ENCODE measurements at regions of chr10 and their contacts with region 1.

Region 1: GRCh38 chr10:69506834-69507721 is 55.8 kb downstream of the TSPAN15 start:
- DNase-seq: no peak
- H3K4me3 ChIP-seq: peak overlapping the region in 2 of 7 experiments; percentile 46 to 73
- H3K27ac ChIP-seq: no peak overlapping the region
- H3K4me1 ChIP-seq: peaks cover 0 to 4% (median 2%) of the 10 kb centered on the region in 4 experiments
- H3K27me3 ChIP-seq: peaks cover 0 to 5% (median 0%) of the 10 kb centered on the region in 5 experiments

Region 2: GRCh38 chr10:69408318-69409175 is 98.5 kb before region 1 on chr10:
- CTCF ChIA-PET with region 1: interaction called, 49 read pairs
- POLR2A ChIA-PET with region 1: no interaction called
- DNase-seq: peak; percentile 91 to 95 (median 95)
- H3K4me3 ChIP-seq: peak overlapping the region in 4 of 7 experiments; percentile 29 to 62 (median 46)
- H3K27ac ChIP-seq: no peak overlapping the region
- H3K4me1 ChIP-seq: peaks cover 0 to 20% (median 13%) of the 10 kb centered on the region in 4 experiments
- H3K27me3 ChIP-seq: no peaks in the 10 kb centered on the region

Region 3: GRCh38 chr10:69425511-69426298 is 81.4 kb before region 1 on chr10:
- CTCF ChIA-PET with region 1: interaction called, 17 read pairs
- POLR2A ChIA-PET with region 1: no interaction called
- DNase-seq: no peak
- H3K4me3 ChIP-seq: no peak overlapping the region
- H3K27ac ChIP-seq: no peak overlapping the region
- H3K4me1 ChIP-seq: peaks cover 0 to 11% (median 2%) of the 10 kb centered on the region in 4 experiments
- H3K27me3 ChIP-seq: no peaks in the 10 kb centered on the region

Region 4: DNA sequence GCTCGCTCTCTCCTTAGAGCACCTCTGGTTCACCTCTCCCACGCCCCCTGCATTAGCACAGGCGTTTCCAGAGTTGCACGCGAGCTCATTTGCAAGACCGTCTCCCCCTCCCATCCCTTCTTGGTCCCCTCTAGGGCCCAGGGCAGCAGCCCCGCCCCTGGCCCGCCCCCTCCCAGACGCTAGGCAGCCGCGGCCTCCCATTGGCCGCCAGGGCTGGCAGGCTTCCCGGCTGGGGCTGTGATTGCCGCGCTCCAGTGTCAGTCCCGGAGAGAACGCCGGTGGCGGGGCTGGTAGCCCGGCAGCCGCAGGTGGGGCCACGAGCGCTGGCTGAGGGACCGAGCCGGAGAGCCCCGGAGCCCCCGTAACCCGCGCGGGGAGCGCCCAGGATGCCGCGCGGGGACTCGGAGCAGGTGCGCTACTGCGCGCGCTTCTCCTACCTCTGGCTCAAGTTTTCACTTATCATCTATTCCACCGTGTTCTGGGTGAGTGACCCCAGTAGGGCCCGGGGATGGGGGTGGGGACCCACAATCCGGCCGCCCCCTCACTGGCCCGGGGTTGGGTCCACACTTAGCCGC is 55.8 kb before region 1 on chr10 and contains the start of gene TSPAN15:
- CTCF ChIA-PET with region 1: interaction called, 12 read pairs
- POLR2A ChIA-PET with region 1: no interaction called
- DNase-seq: peak; percentile 64 to 81 (median 78)
- H3K4me3 ChIP-seq: peak within 1 kb of the TSS; percentile 11 to 73 (median 60)
- H3K27ac ChIP-seq: no peak within 1 kb of the TSS
- H3K4me1 ChIP-seq: peaks cover 5 to 27% (median 14%) of the 10 kb centered on the region in 4 experiments
- H3K27me3 ChIP-seq: peaks cover 0 to 26% (median 4%) of the 10 kb centered on the region in 5 experiments

Region 5: GRCh38 chr10:69558559-69558958 is 51.5 kb after region 1 on chr10:
- CTCF ChIA-PET with region 1: no interaction called
- POLR2A ChIA-PET with region 1: no interaction called
- DNase-seq: peak; percentile 30 to 74 (median 66)
- H3K4me3 ChIP-seq: no peak overlapping the region
- H3K27ac ChIP-seq: no peak overlapping the region
- H3K4me1 ChIP-seq: peaks cover 0 to 7% (median 3%) of the 10 kb centered on the region in 4 experiments
- H3K27me3 ChIP-seq: peaks cover 0 to 13% (median 2%) of the 10 kb centered on the region in 5 experiments

Region 6: GRCh38 chr10:69573056-69573806 is 66.2 kb after region 1 on chr10 and contains the start of gene NEUROG3:
- CTCF ChIA-PET with region 1: no interaction called
- POLR2A ChIA-PET with region 1: no interaction called
- DNase-seq: peak; percentile 29 to 59 (median 54)
- H3K4me3 ChIP-seq: peak within 1 kb of the TSS in 6 of 7 experiments; percentile 23 to 72 (median 48)
- H3K27ac ChIP-seq: no peak within 1 kb of the TSS
- H3K4me1 ChIP-seq: peaks cover 0 to 35% (median 26%) of the 10 kb centered on the region in 4 experiments
- H3K27me3 ChIP-seq: peaks cover 8 to 100% (median 70%) of the 10 kb centered on the region in 5 experiments